ENCODE measurements at regions of chr6 and their contacts with region 1.

Region 1: DNA sequence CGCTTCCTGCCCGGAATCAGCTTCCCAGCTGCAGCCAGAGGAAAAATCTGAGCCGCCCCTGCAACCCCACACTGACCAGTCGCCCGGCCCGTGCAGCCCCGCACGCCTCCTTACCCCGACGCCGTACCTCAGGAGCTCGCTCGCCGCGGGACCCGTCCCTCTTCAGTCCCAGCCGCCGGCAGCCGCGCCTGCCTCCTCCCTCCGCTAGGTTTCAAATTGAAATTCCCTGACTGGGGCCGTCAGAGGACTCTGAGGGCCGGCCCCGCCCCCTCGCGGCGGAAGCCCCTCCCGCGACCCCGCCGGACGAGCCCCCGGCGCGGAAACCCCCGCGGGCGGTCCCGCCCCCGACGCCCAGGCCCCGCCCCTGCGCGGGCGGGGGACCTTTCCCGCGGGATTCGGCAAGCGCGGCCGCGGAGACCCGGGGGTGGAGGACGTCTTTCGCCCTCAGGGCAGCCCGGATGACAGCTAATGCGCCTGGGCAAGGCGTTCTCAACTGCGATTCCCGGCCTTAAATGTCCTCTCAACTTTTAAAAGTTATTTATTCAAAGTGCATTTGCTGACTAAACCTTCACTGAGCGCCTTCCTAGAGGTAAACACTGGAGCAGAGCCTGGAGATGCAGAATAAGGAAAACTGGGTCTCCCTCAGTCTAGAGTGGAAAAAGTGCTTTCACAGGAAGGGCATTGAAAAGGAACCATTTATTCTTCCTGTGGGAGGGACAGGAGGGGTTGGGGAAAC is at the start of gene EPB41L2:
- DNase-seq: peak; percentile 92 to 95
- ATAC-seq: peak; percentile 96
- H3K4me3 ChIP-seq: peak within 1 kb of the TSS; percentile 67 to 88
- H3K27ac ChIP-seq: peak within 1 kb of the TSS in 1 of 2 donors; percentile 71
- H3K4me1 ChIP-seq: no peaks in the 10 kb centered on the region
- H3K27me3 ChIP-seq: no peaks in the 10 kb centered on the region
- total RNA-seq, gene EPB41L2: 176 to 340 TPM

Region 2: GRCh38 chr6:130713144-130713543 is 350.1 kb before region 1 on chr6:
- intact Hi-C with region 1: no loop called
- DNase-seq: no peak
- ATAC-seq: no peak
- H3K4me3 ChIP-seq: no peak overlapping the region
- H3K27ac ChIP-seq: no peak overlapping the region
- H3K4me1 ChIP-seq: no peaks in the 10 kb centered on the region
- H3K27me3 ChIP-seq: no peaks in the 10 kb centered on the region

Region 3: GRCh38 chr6:130885392-130886192 is 177.6 kb before region 1 on chr6:
- intact Hi-C with region 1: loop called (anchors 5 kb)
- DNase-seq: peak in 1 of 2 donors; percentile 57
- ATAC-seq: peak; percentile 86
- H3K4me3 ChIP-seq: no peak overlapping the region
- H3K27ac ChIP-seq: no peak overlapping the region
- H3K4me1 ChIP-seq: no peaks in the 10 kb centered on the region
- H3K27me3 ChIP-seq: no peaks in the 10 kb centered on the region

Region 4: GRCh38 chr6:130969791-130970491 is 93.3 kb before region 1 on chr6:
- intact Hi-C with region 1: loop called in 1 of 2 experiments (anchors 10 kb)
- DNase-seq: peak in 1 of 2 donors; percentile 62
- ATAC-seq: peak; percentile 76
- H3K4me3 ChIP-seq: peak overlapping the region; percentile 90 to 96
- H3K27ac ChIP-seq: peak overlapping the region; percentile 54 to 67
- H3K4me1 ChIP-seq: peaks cover 0 to 7% of the 10 kb centered on the region in 2 donors
- H3K27me3 ChIP-seq: no peaks in the 10 kb centered on the region

Region 5: DNA sequence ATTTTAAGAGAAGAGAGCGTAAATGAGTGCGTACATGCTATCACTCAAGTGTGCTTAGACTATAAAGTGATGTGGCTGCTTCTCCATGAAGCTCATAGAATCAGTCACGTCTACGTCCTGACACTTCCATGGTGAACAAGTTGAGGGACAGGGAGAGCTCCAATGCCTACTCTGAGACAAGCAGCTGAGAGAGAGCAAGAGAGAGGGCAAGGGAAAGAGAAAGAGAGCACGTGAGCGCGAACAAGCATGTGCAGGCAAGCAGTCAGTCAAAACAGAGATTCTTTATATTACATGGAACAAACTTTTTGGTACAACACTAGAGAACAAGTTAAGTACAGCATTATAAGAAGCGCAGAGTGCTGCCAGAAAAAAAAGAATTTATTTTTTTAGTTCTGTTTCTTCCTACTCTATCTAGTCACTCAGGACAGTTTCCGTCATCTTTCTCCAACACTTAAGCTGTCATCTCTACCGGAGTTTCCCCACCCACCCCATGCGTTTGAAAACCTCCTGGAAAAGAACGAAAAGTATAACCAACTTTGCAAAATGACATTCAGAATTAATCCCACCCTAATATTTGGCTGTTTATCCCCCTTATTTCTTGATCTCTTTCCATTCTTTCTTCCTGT is 62.0 kb before region 1 on chr6:
- intact Hi-C with region 1: loop called in 1 of 2 experiments (anchors 5 kb)
- DNase-seq: no peak
- ATAC-seq: peak; percentile 47
- H3K4me3 ChIP-seq: peak overlapping the region; percentile 36 to 48
- H3K27ac ChIP-seq: no peak overlapping the region
- H3K4me1 ChIP-seq: peaks cover 0 to 6% of the 10 kb centered on the region in 2 donors
- H3K27me3 ChIP-seq: no peaks in the 10 kb centered on the region

Region 6: DNA sequence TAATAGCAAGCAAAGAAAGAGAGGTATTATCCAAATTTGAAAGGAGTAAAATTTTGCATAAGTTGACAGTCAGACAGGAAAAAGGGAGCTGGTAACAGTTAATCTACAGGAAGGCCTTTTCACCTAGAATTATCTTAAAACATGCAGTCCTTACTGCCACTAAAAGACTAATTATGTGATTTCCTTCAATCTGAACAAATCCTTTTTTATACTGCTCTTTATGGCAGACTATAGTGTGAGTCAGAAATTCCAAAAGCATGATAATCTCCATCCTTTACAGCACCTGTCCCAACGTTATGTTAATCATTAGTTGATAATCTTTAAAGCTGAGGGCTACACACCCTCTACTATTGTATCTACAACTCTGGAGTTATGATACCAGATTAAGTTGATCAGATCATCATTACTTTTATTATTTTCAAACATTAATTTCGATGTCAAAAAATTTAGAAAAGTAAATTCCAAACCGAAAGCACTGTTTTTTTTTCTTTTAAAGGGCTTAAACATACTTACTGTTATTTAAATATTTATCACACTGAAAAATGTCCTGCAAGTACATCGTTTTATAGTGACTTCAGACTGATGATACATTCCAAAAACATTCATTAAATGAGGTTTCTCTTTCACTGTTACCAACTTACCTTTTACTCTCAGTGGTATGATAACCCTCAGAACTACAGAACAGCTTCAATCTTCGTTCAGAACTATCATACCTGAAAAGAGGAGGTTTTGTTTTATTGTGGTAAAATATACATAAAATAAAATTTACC is 38.9 kb after region 1 on chr6:
- intact Hi-C with region 1: no loop called
- DNase-seq: no peak
- ATAC-seq: no peak
- H3K4me3 ChIP-seq: no peak overlapping the region
- H3K27ac ChIP-seq: no peak overlapping the region
- H3K4me1 ChIP-seq: no peaks in the 10 kb centered on the region
- H3K27me3 ChIP-seq: no peaks in the 10 kb centered on the region

Measured in aorta (tissue), 5 donors.